ENCODE measurements at regions of chr12 and their contacts with region 1.

Region 1: GRCh38 chr12:16385782-16386646 is 38.6 kb downstream of the MGST1 start:
- DNase-seq: peak in 5 of 10 donors; percentile 12 to 74 (median 29)

Region 2: DNA sequence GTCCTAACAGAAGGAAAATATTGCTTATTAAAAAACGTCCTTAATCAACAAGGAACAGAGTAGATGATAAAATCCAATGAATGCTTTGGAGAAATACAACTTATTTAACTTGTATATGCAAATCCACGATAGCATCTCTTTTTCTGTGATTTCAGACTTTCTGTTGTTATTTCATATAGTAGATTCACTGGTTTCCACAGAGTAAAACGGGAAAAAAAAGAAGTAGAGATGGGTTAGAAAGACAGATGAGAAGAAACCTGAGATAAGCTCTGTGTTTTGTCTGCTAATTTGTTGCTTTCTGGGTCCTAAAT is 1256.3 kb after region 1 on chr12:
- intact Hi-C with region 1: loop called (anchors 5 kb)
- DNase-seq: no peak

Measured in posterior cingulate gyrus (tissue), 11 donors.